Breast epithelium (tissue), 4 donors: ENCODE measurements at regions of chrX and their contacts with region 1.

Region 1: DNA sequence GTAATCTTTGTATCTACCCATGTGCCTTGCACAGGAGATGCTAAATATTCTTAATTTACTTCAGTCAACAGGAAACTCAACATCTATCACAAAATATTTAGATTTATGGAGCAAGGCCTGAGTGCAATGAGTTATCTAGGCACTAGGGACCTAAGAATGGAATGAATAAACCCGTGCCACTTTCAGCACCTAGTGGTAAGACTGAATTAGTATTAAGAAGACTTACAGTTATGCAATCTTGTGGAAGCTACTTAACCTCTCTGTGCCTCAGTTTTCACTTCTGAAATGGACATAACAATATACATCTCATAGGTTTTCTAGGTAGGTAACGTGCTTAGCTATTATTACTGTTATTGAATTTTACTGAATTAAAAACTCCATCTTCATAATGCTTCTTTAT is 144.6 kb upstream of the MAP3K15 start:
- DNase-seq: no peak
- H3K4me3 ChIP-seq: no peak overlapping the region
- H3K27ac ChIP-seq: no peak overlapping the region
- H3K4me1 ChIP-seq: no peaks in the 10 kb centered on the region
- H3K27me3 ChIP-seq: peaks cover 0 to 7% of the 10 kb centered on the region in 2 donors
- CTCF ChIP-seq: no peak
- POLR2A ChIP-seq: no peak

Region 2: GRCh38 chrX:19678941-19679340 is 19.0 kb after region 1 on chrX:
- intact Hi-C with region 1: loop called (anchors 1 kb)
- DNase-seq: no peak
- H3K4me3 ChIP-seq: no peak overlapping the region
- H3K27ac ChIP-seq: no peak overlapping the region
- H3K4me1 ChIP-seq: no peaks in the 10 kb centered on the region
- H3K27me3 ChIP-seq: peaks cover 0 to 17% of the 10 kb centered on the region in 2 donors
- CTCF ChIP-seq: no peak
- POLR2A ChIP-seq: no peak

Region 3: GRCh38 chrX:20091499-20091898 is 431.6 kb after region 1 on chrX:
- intact Hi-C with region 1: loop called (anchors 5 kb)
- DNase-seq: no peak
- H3K4me3 ChIP-seq: no peak overlapping the region
- H3K27ac ChIP-seq: no peak overlapping the region
- H3K4me1 ChIP-seq: no peaks in the 10 kb centered on the region
- H3K27me3 ChIP-seq: peaks cover 0 to 36% of the 10 kb centered on the region in 2 donors
- CTCF ChIP-seq: no peak
- POLR2A ChIP-seq: no peak

Region 4: DNA sequence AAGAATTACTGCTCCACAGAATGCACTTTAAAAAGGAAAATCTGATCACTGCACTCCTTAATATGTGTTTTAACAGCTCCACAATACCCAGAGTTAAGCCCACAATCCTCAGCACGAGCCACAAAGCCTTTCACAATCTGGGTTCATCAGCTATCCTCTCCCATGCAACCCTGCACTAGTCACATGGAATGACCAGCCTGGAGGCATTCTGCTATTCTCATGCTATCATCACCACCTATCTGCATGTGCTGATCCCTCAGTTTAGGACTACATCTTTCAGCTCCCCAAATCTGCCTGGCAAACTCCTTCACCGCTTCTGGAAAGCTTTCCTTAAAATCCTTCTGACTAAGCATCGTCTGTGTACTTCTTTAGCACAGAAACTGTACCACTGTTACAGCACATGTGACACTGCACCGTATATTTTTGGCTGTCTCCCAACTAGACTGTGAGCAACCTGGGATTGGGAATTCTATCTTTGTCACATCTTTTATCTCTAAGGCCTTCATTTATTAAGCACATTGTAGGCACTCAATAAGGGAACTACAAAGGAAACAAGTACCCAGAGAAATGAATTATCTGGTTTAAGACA is 500.0 kb after region 1 on chrX:
- intact Hi-C with region 1: no loop called
- DNase-seq: no peak
- H3K4me3 ChIP-seq: no peak overlapping the region
- H3K27ac ChIP-seq: no peak overlapping the region
- H3K4me1 ChIP-seq: no peaks in the 10 kb centered on the region
- H3K27me3 ChIP-seq: peaks cover 0 to 34% of the 10 kb centered on the region in 2 donors
- CTCF ChIP-seq: no peak
- POLR2A ChIP-seq: no peak

Region 5: GRCh38 chrX:20594985-20595384 is 935.1 kb after region 1 on chrX:
- intact Hi-C with region 1: no loop called
- DNase-seq: no peak
- H3K4me3 ChIP-seq: no peak overlapping the region
- H3K27ac ChIP-seq: no peak overlapping the region
- H3K4me1 ChIP-seq: no peaks in the 10 kb centered on the region
- H3K27me3 ChIP-seq: peaks cover 0 to 30% of the 10 kb centered on the region in 2 donors
- CTCF ChIP-seq: no peak
- POLR2A ChIP-seq: no peak